Mammary epithelial cell (primary cell): ENCODE measurements at regions of chr7 and their contacts with region 1.

Region 1: DNA sequence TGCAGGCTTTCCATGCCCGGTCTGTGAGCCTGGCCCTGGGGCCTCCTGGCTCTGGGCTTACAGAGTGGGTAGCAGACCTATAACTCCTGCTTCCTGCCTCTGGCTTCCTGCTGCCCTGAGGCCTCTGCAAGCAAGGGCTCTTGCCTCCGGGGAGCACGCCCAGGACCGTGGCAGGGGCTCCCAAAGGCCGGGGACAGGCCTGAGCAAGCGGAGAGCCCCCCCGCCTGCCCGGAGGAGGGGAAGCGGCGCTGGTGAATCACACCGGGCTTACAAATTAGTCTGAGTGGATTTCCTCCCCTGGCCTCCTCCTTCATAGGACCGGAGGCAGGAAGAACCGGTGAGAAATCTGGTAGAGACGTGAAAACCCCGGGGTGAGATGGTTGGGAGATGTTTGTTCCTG is 1.5 kb upstream of the MYL10 start:
- DNase-seq: peak; percentile 89
- H3K4me3 ChIP-seq: no peak overlapping the region
- H3K27ac ChIP-seq: peak overlapping the region; percentile 23
- H3K4me1 ChIP-seq: peaks cover 21% of the 10 kb centered on the region
- H3K27me3 ChIP-seq: no peaks in the 10 kb centered on the region
- CTCF ChIP-seq: no peak

Region 2: DNA sequence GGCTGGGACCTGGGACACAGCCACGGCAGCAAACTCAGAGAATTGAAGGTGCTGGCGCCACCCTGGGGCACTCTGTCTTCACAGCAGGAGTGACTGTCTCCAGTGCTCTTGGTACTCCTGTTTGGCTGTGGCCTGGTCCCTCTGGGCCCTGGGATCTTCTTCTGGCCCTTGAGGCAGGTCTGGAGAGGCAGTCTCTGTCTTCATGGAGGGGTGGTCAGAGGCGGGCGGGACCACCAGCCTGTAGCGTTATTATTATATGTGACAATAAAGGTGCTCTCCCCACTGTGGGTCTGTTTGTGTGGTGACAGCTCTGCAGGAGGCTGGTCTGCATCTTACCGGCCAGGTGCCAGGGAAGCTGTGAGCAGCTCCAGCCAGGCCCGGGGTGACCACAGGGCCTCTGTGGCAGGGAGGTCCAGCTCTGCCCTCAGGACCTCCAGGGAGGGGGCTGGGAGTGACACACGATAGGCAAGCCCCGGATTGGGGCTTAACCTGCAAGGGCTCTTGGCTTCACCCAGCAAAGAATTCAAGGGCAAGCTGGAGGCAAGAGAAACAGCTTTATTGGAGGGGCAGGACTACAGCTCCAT is 71.8 kb before region 1 on chr7:
- CTCF ChIA-PET with region 1: no interaction called
- dilution Hi-C with region 1: loop called (anchors 5 kb)
- in situ Hi-C with region 1: no loop called
- intact Hi-C with region 1: no loop called
- DNase-seq: no peak
- H3K4me3 ChIP-seq: no peak overlapping the region
- H3K27ac ChIP-seq: no peak overlapping the region
- H3K4me1 ChIP-seq: no peaks in the 10 kb centered on the region
- H3K27me3 ChIP-seq: peaks cover 1% of the 10 kb centered on the region
- CTCF ChIP-seq: peak in 1 of 2 donors; percentile 11

Region 3: DNA sequence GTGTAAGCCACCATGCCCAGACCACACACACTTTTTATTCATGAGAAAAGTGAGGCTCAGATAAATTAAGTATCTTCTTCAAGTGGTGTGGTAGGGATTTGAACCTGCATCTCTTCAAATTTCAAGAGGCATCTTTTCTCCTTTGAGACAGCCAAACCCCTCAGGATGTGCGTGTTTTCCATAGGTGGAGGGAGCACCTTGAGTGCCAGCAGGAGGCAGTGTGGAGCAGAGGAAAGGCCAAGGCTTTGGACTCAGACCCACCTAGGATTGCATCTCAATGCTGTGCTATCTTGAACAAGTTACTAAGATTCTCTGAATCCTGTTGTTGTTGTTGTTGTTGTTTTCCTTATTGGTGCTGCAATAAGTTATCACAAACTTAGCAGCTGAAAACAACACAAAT is 38.7 kb after region 1 on chr7:
- CTCF ChIA-PET with region 1: interaction called, 10 read pairs
- dilution Hi-C with region 1: no loop called
- in situ Hi-C with region 1: no loop called
- intact Hi-C with region 1: no loop called
- DNase-seq: no peak
- H3K4me3 ChIP-seq: no peak overlapping the region
- H3K27ac ChIP-seq: no peak overlapping the region
- H3K4me1 ChIP-seq: no peaks in the 10 kb centered on the region
- H3K27me3 ChIP-seq: peaks cover 2% of the 10 kb centered on the region
- CTCF ChIP-seq: peak in 1 of 2 donors; percentile 12

Region 4: GRCh38 chr7:101688183-101688831 is 57.7 kb after region 1 on chr7:
- CTCF ChIA-PET with region 1: no interaction called
- dilution Hi-C with region 1: loop called (anchors 5 kb)
- in situ Hi-C with region 1: no loop called
- intact Hi-C with region 1: no loop called
- DNase-seq: peak; percentile 34
- H3K4me3 ChIP-seq: peak overlapping the region in 2 of 3 experiments; percentile 34 to 35
- H3K27ac ChIP-seq: no peak overlapping the region
- H3K4me1 ChIP-seq: peaks cover 6% of the 10 kb centered on the region
- H3K27me3 ChIP-seq: no peaks in the 10 kb centered on the region
- CTCF ChIP-seq: peak; percentile 53 to 92

Region 5: DNA sequence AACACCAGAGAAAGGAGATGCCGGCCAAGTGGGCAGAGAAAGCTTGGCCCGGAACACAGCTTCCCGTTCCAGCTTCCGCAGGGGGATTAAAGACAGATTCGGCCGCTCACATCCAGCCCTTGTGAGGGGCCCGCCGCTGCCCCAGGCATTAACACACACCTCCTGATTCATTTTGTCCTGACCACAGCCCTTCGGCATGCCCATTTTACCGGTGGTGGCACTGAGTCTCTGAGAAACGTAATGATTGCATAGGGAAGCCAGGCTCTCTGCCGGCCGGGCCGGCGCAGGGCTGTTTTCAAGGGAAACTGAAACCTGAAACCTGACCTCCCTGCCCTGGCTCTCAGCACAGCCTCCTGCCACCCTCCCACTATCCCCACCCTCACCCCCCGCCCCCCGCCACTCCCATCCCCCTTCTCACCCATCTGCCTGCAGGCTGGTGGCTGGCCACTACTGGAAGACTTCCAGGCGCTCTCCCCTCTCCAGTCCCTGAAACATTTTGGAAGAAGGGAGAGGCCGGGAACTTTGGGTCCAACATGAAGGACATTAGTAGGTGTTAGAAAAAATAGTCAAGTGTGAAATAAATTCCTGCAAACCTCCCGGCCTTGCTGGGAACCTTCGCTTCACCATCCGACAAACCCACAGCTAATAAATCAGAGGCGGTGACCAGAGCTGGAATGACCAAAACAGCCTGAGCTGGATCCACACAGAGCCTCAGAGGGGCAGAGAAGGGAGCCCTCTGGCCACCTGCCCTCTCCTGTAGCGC is 103.3 kb after region 1 on chr7:
- CTCF ChIA-PET with region 1: no interaction called
- dilution Hi-C with region 1: loop called (anchors 5 kb)
- in situ Hi-C with region 1: no loop called
- intact Hi-C with region 1: no loop called
- DNase-seq: no peak
- H3K4me3 ChIP-seq: peak overlapping the region in 1 of 3 experiments; percentile 11
- H3K27ac ChIP-seq: no peak overlapping the region
- H3K4me1 ChIP-seq: no peaks in the 10 kb centered on the region
- H3K27me3 ChIP-seq: no peaks in the 10 kb centered on the region
- CTCF ChIP-seq: no peak